Lower leg skin (tissue), 4 donors: ENCODE measurements at regions of chr11 and their contacts with region 1.

Region 1: DNA sequence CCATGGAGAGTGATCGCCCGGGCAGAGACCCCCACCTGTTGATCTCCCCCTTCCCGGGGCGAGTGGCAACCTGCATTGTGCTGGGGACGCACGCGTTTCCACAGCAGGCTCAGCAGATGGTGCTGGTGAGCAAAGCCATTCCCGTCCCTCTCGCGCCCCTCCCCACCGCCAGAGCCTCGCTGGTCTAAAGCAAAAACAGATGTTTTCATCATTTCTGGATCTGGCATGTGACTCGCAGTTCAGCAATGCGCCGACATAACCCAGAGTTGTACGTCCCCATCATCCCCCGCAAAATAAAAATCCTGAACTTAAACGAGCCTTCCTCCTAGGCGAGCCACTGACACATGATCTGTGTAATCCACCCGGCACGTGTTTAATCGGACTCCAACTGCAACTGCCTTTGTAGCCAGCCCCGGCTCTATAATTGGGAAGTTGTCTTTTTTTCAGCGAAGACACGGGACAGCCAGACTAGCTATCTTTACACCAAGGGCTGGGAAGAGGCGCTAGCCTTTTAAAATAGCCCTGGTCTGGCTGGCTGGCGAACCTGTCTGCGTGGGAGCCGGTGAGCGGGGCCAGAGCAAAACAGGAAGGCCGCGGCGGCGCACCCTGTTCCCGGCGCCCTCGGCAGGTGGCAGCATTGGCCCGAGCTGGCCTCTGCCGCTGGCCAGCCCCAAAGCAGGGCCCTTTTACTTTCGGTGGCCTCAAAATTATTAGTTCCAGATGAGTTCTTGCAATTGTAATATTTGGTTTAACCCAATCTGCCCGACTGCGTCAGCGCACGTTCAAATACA is 203.0 kb upstream of the SORL1-AS1 start:
- DNase-seq: peak; percentile 77 to 97
- H3K4me3 ChIP-seq: no peak overlapping the region
- CTCF ChIP-seq: peak in 1 of 3 donors; percentile 36
- POLR2A ChIP-seq: no peak

Region 2: DNA sequence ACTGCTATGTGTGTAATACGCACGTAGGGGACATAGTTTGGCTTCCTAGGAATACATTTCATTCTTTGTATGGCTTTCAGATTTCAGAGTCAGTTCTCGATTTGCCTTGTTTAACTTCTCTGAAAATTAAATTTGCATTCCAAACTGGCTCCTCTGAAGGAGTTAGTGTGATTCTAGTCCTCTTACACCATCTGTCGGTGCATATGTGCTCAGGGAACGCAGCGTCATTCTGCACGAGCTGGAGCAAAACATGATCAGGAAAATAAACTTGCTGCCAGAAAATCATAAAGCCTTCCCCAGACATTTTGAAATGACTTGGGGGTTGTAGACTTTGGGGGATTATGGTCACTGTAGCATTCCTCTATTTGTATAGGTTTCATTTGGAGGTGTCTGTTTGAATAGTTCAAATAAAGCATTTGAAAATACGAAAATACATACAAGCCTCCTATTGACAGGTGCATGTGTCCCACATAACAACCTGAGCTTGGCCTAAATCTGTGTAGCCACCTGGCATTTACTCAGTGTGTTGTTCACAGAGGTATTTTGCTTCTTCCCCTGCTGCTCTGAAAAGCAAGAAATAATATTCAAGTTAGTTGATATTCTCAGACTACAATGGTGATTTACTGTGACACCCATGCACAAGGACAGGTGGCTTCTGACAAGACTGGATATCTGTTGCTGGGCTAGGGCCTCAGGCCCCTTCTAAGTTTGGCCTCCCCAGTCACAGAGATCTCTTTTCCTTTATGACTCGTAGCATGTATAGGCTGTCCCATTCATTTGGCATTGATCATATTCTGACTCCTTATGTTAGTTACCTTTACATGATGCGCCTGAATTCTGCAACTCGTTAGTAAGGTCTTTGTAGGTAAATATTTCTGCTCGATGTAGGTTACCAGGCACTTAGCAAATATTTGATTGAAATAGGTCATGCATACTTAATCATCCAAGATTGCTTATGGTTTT is 121.3 kb before region 1 on chr11:
- intact Hi-C with region 1: no loop called
- DNase-seq: peak in 1 of 2 donors; percentile 16
- H3K4me3 ChIP-seq: no peak overlapping the region
- CTCF ChIP-seq: no peak
- POLR2A ChIP-seq: no peak

Region 3: DNA sequence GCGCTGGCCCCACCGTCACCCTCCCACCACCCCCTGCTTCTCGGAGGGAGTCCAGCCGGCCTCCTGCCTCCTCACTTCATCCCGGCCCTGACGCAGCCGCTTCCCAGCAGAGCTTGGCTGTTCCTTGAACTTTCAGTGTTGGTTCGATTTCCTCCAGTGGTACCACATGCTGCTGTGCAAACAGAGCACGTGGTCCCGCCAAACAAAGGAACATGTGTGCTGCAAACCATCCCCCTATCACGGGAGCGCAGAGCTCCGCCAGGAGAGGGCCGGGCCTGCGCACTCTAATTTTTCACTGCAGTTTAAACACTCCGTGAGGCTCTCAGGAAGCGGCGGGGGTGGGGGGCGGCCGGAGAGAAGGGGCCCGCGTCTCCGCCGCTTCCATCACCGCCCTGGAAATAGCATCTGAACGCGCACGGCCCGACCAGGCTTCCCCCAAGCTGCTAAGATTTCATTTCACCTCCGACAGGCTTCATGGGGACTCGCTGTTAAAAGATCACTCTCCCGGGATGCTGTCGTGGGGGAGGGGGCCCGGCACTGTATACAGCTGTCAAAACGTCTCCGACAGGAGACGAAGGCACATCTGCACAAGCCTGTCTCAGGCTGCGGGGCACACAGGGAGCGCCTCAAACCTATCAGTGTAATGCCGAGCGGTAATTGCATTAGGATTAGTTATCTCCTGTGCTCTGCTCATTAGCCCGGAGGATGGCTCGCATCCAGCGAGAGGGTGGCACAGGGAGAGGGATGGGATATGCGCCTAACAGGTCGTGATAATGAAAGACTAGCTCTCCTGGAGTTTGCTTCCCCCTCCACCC is 66.9 kb after region 1 on chr11:
- intact Hi-C with region 1: no loop called
- DNase-seq: peak; percentile 73 to 94
- H3K4me3 ChIP-seq: no peak overlapping the region
- CTCF ChIP-seq: no peak
- POLR2A ChIP-seq: no peak

Region 4: DNA sequence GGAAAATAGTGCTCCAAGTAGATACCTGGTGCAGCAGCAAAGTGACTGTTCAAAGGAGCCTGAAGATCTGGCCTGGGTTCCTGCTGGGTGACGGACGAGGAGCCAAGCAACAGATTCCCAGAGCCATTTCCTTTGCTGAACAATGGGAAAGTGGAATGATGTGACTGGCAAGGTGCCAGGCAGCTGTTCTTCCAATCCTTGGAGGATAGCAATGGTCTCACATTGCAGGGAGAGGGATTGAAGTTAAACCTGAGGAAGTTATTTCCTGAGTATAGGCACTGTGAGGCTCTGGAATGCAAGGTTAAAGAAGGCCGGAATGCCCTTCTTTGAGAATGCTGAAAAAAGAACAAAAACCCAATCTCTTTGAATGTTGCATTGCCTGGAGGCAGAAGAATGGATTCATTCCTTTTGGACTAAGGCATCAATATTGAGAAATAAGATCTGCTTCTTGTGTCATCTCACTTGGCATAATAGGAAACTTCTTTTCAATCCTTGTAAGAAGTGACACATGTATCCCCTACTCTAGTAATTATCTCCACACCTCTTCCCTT is 236.5 kb after region 1 on chr11:
- intact Hi-C with region 1: no loop called
- DNase-seq: peak; percentile 24 to 87
- H3K4me3 ChIP-seq: no peak overlapping the region
- CTCF ChIP-seq: no peak
- POLR2A ChIP-seq: no peak

Region 5: GRCh38 chr11:122202951-122203456 is 547.3 kb after region 1 on chr11:
- intact Hi-C with region 1: loop called (anchors 10 kb)
- DNase-seq: peak; percentile 56 to 95
- H3K4me3 ChIP-seq: no peak overlapping the region
- CTCF ChIP-seq: peak in 1 of 3 donors; percentile 73
- POLR2A ChIP-seq: no peak

Region 6: DNA sequence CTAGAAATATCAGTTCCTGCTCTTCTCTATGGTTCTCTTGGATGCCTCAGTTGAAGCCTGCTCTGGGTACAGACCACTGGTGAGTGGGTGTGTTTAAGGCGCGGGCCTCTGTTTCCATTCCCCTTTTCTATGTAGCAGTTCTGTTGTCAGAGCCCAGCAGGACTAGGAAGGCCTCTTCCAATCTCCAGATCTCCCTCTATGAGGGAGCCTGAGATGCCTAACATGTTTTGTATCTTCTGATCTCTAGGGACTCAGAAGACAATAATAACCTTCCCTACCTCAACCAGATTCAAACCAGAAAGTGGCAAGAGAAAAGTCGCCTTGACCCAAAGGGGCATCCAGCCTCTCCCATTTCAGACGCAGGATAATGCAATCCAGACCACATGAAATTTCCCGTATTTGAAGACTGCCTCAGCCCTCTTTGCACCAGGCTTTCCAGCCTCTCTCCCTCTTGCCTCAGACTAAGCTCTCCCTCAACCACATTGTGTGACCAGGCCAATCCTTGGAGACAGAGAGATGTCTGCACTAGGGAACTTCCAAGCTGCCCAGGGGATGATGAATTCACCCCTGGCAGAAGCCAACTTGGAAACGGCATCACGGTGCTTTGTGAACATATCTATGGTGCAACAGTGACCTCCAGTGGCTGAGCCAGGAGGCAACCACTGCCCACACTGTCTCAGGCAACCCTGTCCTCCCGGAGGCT is 849.7 kb after region 1 on chr11:
- intact Hi-C with region 1: loop called (anchors 10 kb)
- DNase-seq: peak; percentile 85 to 96
- H3K4me3 ChIP-seq: no peak overlapping the region
- CTCF ChIP-seq: peak in 1 of 3 donors; percentile 24
- POLR2A ChIP-seq: no peak